ENCODE measurements at regions of chrX and their contacts with region 1.

Region 1: DNA sequence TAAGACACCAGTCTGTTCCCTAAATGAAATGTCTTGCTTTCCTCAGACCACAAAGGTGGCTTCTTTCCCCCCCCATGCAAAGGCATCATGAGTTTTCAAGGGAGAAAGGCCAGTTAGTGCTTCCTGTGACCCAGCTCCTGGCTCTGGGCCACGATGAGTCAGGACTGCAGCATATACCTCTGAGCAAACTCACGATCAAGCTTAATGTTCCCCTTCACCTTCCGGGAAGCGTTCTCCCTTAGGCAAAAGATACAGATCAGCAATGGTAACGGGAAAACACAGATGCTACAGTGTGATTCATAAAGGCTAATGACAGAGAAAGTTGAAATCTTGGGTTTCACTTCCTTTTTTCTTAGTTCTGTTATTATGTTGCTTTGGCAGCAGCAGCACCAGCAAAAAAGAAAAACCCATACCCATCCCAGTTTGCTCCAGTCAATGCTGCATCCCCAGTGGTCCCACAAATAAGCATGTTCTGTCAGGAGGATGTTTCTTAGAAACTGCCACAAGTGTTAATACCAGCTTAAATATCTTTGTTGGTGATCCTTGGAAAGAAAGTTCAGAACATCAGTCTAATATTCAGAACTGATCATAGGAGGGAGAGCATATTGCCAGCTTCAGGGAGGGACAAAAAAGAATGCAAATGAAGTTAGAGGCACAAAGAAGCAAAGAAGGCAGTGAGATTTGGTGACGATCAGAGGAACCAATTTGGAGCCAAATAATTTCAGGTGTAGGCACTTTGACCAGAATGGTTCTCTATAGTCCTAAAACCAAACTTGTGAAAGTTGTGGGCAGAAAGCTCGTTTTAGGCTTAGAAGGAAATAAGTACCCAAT is 41.2 kb downstream of the LONRF3 start:
- DNase-seq: peak; percentile 29
- CTCF ChIP-seq: no peak

Region 2: DNA sequence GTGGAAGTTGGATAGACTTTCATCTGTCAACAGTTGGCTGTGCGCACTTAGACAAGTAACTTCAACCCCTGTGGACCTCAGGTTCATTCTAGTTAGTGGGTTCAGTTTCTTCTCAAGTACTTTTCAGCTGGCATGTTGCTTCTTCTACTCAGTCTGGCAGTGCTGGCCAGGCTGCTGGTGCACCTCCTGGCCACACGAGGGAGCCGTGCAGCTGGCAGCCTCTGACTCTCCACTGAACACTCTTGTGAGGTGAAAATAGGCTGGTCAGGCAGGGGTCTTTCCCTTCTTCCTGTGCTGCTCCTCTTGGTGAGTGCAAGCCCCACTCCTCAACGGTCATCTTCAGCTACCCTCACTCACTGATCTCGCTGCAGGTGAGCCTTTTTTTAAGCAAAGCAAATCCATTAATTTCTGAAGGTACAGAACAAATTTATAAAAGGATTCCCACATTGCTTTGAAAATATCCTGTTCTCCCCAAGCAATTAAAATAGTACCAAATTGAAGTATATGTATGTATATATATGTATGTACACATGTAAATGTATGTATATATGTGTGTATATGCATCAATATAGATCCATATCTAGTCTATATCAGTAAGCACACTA is 10.6 kb before region 1 on chrX:
- CTCF ChIA-PET with region 1: interaction called, 14 read pairs
- POLR2A ChIA-PET with region 1: no interaction called
- DNase-seq: peak; percentile 63
- CTCF ChIP-seq: peak; percentile 87

Region 3: DNA sequence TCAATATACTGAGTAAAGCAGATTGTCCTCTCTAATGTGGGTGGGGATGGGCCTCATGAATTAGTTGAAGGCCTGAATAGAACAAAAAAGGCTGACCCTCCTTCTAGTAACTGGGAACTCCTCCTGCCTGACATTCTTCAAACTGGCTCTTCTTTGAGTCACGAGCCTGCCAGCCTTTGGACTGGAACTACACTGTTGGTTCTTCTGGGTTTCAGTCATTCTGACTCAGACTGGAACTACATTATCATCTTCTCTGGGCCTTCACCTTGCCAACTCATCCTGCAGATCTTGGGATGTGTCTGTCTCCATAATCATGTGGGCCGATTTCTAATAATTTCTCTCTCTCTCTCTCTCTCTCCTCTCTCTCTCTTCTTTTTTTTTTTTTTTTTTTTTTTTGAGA is 30.3 kb after region 1 on chrX:
- CTCF ChIA-PET with region 1: no interaction called
- POLR2A ChIA-PET with region 1: no interaction called
- DNase-seq: no peak
- CTCF ChIP-seq: no peak